Activated B cell treated with CpG ODN at 0.5 μM for 24 hours (primary cell): ENCODE measurements at regions of chr10 and their contacts with region 1.

Region 1: GRCh38 chr10:69061305-69062161 is 26.4 kb upstream of the SRGN start:
- DNase-seq: no peak
- ATAC-seq: peak; percentile 64
- H3K4me3 Mint-ChIP-seq: peak overlapping the region; percentile 73
- H3K27ac Mint-ChIP-seq: peak overlapping the region; percentile 18
- H3K4me1 Mint-ChIP-seq: peaks cover 41% of the 10 kb centered on the region
- H3K27me3 Mint-ChIP-seq: no peaks in the 10 kb centered on the region
- CTCF ChIP-seq: no peak

Region 2: DNA sequence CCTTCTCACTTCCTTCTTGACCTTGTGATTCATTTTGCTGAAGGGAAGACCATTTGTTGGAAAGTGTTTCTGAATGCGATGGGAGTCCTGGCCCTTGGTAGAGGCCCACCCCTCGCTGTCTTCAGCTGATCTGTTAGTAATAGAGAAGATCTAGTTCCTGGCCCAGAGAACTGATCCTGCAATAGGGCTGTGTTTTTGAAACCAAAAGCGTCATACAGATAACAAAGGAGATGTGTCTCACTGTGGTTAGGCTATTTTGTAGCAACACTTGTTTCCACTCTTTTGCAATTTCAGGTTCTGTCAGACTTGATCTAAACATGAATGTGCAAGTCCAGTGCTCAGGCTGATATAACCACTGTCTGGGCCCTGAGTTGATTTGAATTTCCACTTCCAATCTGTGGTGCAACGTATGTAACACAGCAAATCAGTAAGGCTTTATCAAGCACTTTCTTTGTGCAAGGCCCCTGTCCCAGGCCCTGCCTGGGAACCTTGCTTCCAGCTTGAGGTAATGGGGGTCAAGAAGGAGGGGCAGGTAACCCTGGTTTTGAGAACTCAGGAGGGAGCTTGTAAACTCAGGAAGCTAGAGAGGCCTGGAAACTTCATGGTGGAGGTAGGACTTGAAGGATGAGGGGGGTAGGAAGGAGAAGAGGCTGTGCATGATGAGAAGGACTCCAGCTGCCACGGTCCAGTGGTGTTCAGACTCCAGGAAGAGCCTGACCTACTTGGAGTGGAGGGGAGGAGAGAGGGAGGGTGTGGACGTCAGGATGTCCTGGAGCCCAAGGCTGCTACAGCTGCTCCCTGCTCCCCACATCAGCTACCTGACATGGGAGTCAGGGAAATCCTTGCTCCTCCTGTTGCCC is 15.9 kb before region 1 on chr10:
- CTCF ChIA-PET with region 1: interaction called, 3 read pairs
- POLR2A ChIA-PET with region 1: interaction called, 3 read pairs
- intact Hi-C with region 1: loop called (anchors 2 kb)
- DNase-seq: no peak
- ATAC-seq: no peak
- H3K4me3 Mint-ChIP-seq: no peak overlapping the region
- H3K27ac Mint-ChIP-seq: peak overlapping the region; percentile 85
- H3K4me1 Mint-ChIP-seq: peaks cover 27% of the 10 kb centered on the region
- H3K27me3 Mint-ChIP-seq: no peaks in the 10 kb centered on the region
- CTCF ChIP-seq: no peak

Region 3: GRCh38 chr10:69383558-69383957 is 322.0 kb after region 1 on chr10:
- CTCF ChIA-PET with region 1: no interaction called
- POLR2A ChIA-PET with region 1: no interaction called
- intact Hi-C with region 1: no loop called
- DNase-seq: no peak
- ATAC-seq: no peak
- H3K4me3 Mint-ChIP-seq: no peak overlapping the region
- H3K27ac Mint-ChIP-seq: no peak overlapping the region
- H3K4me1 Mint-ChIP-seq: peaks cover 3% of the 10 kb centered on the region
- H3K27me3 Mint-ChIP-seq: no peaks in the 10 kb centered on the region
- CTCF ChIP-seq: no peak